AG04450 (cell line): ENCODE measurements at regions of chr17 and their contacts with region 1.

Region 1: GRCh38 chr17:43576563-43577229 is 30.6 kb upstream of the ETV4 start:
- DNase-seq: peak; percentile 43
- H3K4me3 ChIP-seq: no peak overlapping the region
- H3K27ac ChIP-seq: no peak overlapping the region
- H3K27me3 ChIP-seq: no peaks in the 10 kb centered on the region
- CTCF ChIP-seq: peak; percentile 94

Region 2: GRCh38 chr17:43524945-43525575 is 51.6 kb before region 1 on chr17:
- CTCF ChIA-PET with region 1: interaction called, 17 read pairs
- POLR2A ChIA-PET with region 1: no interaction called
- DNase-seq: no peak
- H3K4me3 ChIP-seq: no peak overlapping the region
- H3K27ac ChIP-seq: no peak overlapping the region
- H3K27me3 ChIP-seq: no peaks in the 10 kb centered on the region
- CTCF ChIP-seq: no peak

Region 3: DNA sequence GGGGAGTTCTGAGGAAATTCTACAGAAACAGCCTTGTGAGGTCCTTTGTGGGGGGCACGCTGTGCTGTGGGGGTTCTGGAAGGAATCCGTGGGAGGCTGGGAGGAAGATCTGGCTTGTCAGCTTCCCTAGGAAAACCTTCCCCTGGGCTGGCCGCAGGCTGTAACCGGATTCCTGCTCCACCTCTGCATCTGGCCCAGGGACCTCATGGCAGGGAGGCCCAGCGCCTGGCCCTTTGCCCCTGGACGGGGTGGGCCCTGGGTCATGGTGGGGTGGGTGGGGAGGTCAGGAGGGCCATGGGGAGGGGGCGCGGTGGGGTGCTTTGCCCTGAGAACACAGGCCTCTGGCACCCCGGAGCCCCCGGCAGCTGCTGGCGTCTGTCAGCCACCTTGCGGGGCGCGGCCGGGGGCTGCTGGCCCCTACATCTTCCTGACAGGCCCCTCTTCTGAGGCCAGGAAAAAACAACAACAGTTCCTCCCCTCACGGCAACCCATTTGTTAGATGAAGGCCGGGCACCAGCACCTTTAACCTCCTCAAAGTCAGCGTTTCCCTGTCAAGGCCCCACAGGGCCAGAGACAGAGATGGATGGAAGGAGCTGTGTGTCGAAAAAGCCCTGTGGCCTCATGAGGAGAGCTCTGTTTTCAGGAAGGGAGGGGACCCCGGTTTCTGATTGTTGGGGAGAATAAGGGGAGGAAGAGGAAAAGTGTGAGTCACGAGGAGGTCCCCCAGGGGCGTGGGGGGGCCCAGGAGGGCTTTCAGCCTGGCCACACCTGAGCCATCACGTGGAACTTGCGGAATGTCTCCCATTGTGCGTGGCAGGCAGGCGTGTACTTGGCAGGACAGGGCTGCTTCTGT is 88.6 kb after region 1 on chr17:
- CTCF ChIA-PET with region 1: interaction called, 10 read pairs
- POLR2A ChIA-PET with region 1: no interaction called
- DNase-seq: no peak
- H3K4me3 ChIP-seq: no peak overlapping the region
- H3K27ac ChIP-seq: no peak overlapping the region
- H3K27me3 ChIP-seq: no peaks in the 10 kb centered on the region
- CTCF ChIP-seq: no peak

Region 4: GRCh38 chr17:43694077-43694870 is 117.6 kb after region 1 on chr17:
- CTCF ChIA-PET with region 1: interaction called, 19 read pairs
- POLR2A ChIA-PET with region 1: no interaction called
- DNase-seq: peak; percentile 55
- H3K4me3 ChIP-seq: no peak overlapping the region
- H3K27ac ChIP-seq: no peak overlapping the region
- H3K27me3 ChIP-seq: peaks cover 12% of the 10 kb centered on the region
- CTCF ChIP-seq: peak; percentile 92